OCI-LY7 (cell line): ENCODE measurements at regions of chr15 and their contacts with region 1.

Region 1: GRCh38 chr15:67501177-67501835 is 19.6 kb upstream of the C15orf61 start:
- DNase-seq: peak; percentile 57
- H3K4me3 ChIP-seq: no peak overlapping the region
- H3K27ac ChIP-seq: no peak overlapping the region
- H3K4me1 ChIP-seq: peaks cover 25% of the 10 kb centered on the region
- CTCF ChIP-seq: peak; percentile 81

Region 2: GRCh38 chr15:67833710-67834511 is 332.6 kb after region 1 on chr15:
- CTCF ChIA-PET with region 1: no interaction called
- POLR2A ChIA-PET with region 1: interaction called, 4 read pairs
- intact Hi-C with region 1: loop called (anchors 2 kb)
- DNase-seq: peak; percentile 64
- H3K4me3 ChIP-seq: peak overlapping the region; percentile 52
- H3K27ac ChIP-seq: no peak overlapping the region
- H3K4me1 ChIP-seq: peaks cover 60% of the 10 kb centered on the region
- CTCF ChIP-seq: peak; percentile 77